Ovary (tissue), 10 donors: ENCODE measurements at regions of chr17 and their contacts with region 1.

Region 1: GRCh38 chr17:40177275-40177874 is at the start of gene RAPGEFL1:
- DNase-seq: peak; percentile 71 to 85 (median 74)
- H3K4me3 ChIP-seq: peak within 1 kb of the TSS; percentile 41
- H3K27ac ChIP-seq: no peak within 1 kb of the TSS
- H3K4me1 ChIP-seq: no peaks in the 10 kb centered on the region
- H3K27me3 ChIP-seq: no peaks in the 10 kb centered on the region
- CTCF ChIP-seq: no peak
- EP300 ChIP-seq: no peak
- POLR2A ChIP-seq: no peak
- total RNA-seq, gene RAPGEFL1: 3.6 to 9.1 (median 6.4) TPM

Region 2: DNA sequence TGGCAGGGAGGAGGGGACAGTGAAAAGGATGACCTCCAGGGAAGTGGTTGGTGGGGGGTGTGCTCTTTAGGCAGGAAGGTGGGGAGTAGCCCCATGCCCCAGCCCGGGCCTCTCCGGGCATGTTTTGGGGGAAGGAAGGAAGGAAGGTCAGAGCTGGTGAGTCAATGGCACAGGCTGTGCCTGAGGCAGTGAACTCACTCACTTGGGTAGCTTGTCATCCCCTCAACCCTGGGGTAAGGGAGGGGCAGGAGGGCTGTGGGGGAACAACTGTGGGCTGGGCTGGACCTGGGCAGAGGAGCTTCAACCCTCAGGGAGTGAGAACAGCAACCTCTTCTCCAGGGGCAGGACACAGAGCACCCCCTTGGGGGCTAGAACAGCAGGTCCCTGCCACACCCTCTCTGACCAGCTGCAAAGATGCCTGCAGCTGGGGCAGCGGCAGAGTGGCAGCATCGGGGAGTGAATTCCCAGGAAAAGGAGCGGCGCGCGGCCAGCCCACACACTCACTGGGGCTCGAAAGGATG is 155.9 kb before region 1 on chr17:
- intact Hi-C with region 1: loop called in 1 of 4 experiments (anchors 10 kb)
- DNase-seq: peak in 2 of 5 donors; percentile 43 to 59
- H3K4me3 ChIP-seq: no peak overlapping the region
- H3K27ac ChIP-seq: peak overlapping the region in 1 of 2 donors; percentile 41
- H3K4me1 ChIP-seq: peaks cover 23% of the 10 kb centered on the region
- H3K27me3 ChIP-seq: no peaks in the 10 kb centered on the region
- CTCF ChIP-seq: no peak
- EP300 ChIP-seq: no peak
- POLR2A ChIP-seq: no peak

Region 3: GRCh38 chr17:40038882-40039513 is 138.4 kb before region 1 on chr17:
- intact Hi-C with region 1: loop called in 1 of 4 experiments (anchors 10 kb)
- DNase-seq: peak; percentile 62 to 88 (median 70)
- H3K4me3 ChIP-seq: no peak overlapping the region
- H3K27ac ChIP-seq: peak overlapping the region in 1 of 2 donors; percentile 40
- H3K4me1 ChIP-seq: peaks cover 3% of the 10 kb centered on the region
- H3K27me3 ChIP-seq: no peaks in the 10 kb centered on the region
- CTCF ChIP-seq: peak; percentile 43 to 77 (median 71)
- EP300 ChIP-seq: no peak
- POLR2A ChIP-seq: no peak

Region 4: GRCh38 chr17:40157973-40158372 is 19.4 kb before region 1 on chr17:
- intact Hi-C with region 1: no loop called
- DNase-seq: no peak
- H3K4me3 ChIP-seq: no peak overlapping the region
- H3K27ac ChIP-seq: no peak overlapping the region
- H3K4me1 ChIP-seq: no peaks in the 10 kb centered on the region
- H3K27me3 ChIP-seq: no peaks in the 10 kb centered on the region
- CTCF ChIP-seq: no peak
- EP300 ChIP-seq: no peak
- POLR2A ChIP-seq: no peak

Region 5: GRCh38 chr17:40219073-40219860 is 41.9 kb after region 1 on chr17 and contains the start of gene WIPF2:
- intact Hi-C with region 1: no loop called
- DNase-seq: peak; percentile 96 to 98 (median 97)
- H3K4me3 ChIP-seq: peak within 1 kb of the TSS; percentile 78
- H3K27ac ChIP-seq: peak within 1 kb of the TSS; percentile 80 to 93
- H3K4me1 ChIP-seq: peaks cover 5% of the 10 kb centered on the region
- H3K27me3 ChIP-seq: no peaks in the 10 kb centered on the region
- CTCF ChIP-seq: peak; percentile 78 to 91 (median 90)
- EP300 ChIP-seq: no peak
- POLR2A ChIP-seq: peak; percentile 75
- total RNA-seq, gene WIPF2: 6.1 to 23.0 (median 18.4) TPM

Region 6: GRCh38 chr17:41065829-41066624 is 888.7 kb after region 1 on chr17 and contains the start of gene KRTAP2-4:
- intact Hi-C with region 1: no loop called
- DNase-seq: no peak
- H3K4me3 ChIP-seq: no peak within 1 kb of the TSS
- H3K27ac ChIP-seq: no peak within 1 kb of the TSS
- H3K4me1 ChIP-seq: no peaks in the 10 kb centered on the region
- H3K27me3 ChIP-seq: no peaks in the 10 kb centered on the region
- CTCF ChIP-seq: no peak
- EP300 ChIP-seq: no peak
- POLR2A ChIP-seq: no peak
- total RNA-seq, gene KRTAP2-4: not detected